ENCODE measurements at regions of chr11 and their contacts with region 1.

Region 1: DNA sequence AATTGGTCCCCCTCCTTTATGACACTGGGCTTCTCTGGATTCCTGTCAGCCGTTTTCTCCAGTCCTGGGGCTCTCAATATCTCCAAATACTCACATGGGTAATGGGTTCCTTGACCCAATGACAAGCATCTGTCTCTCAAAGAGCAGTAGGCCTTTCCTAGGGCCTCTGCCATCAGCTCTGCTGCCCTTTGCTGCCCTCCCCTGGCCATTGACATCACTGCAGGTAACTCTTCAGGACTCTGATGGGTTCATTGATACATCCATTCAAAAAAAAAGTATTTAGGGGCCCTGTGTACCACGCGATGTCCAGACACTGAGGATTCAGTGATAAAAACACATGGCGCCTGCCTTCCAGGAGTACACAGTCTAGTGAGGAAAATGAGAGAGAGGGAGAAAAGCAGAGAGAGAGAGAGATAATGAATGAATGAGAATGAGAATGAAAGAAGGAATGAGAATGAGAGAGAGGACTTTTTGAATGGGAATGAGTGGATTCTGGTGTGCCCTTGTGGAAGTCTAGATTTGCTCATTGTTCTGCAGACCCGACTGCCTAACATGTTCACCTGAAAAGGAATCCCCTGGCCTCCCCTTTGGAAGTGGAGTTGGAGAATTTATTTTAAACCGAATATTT is 42.6 kb upstream of the OLFML1 start:
- DNase-seq: peak; percentile 15 to 69 (median 56)
- ATAC-seq: peak; percentile 87
- H3K4me3 ChIP-seq: no peak overlapping the region
- H3K4me3 Mint-ChIP-seq: no peak overlapping the region
- H3K27ac ChIP-seq: no peak overlapping the region
- H3K27ac Mint-ChIP-seq: no peak overlapping the region
- H3K4me1 ChIP-seq: no peaks in the 10 kb centered on the region
- H3K4me1 Mint-ChIP-seq: peaks cover 0 to 5% (median 0%) of the 10 kb centered on the region in 7 donors
- H3K27me3 ChIP-seq: no peaks in the 10 kb centered on the region
- H3K27me3 Mint-ChIP-seq: no peaks in the 10 kb centered on the region

Region 2: DNA sequence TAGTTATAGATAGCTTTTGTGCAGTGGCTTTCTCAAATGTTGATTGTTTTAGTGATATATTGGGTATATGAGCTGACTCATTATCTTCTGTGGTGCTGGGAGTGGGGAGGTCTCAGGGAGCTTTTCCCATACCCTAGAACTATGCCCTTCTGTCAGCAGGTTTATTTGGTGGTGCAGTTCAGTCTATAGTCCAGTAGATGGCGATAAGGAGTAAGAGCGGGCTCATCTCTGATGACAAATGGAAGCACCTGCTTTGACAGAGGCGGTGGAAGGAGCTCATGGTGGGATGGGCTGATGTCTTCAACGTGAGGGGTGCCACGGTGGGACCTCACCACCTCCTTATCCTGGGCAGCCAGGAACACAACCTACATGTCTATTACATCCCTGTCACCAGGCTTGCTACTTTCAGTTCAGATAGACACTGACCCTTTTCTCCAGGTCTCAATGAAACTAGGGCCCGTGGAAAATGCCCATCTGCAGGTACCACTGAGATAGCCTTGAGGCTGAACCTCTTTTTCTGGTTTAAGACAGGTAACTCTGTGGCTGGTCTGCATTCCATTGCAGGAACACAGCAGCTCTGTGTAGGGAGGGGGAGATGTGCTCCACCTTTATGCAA is 630.2 kb before region 1 on chr11:
- CTCF ChIA-PET with region 1: interaction called, 7 read pairs
- POLR2A ChIA-PET with region 1: no interaction called
- intact Hi-C with region 1: loop called (anchors 1 to 10 kb)
- DNase-seq: peak in 8 of 9 donors; percentile 15 to 55 (median 41)
- ATAC-seq: peak; percentile 91
- H3K4me3 ChIP-seq: no peak overlapping the region
- H3K4me3 Mint-ChIP-seq: no peak overlapping the region
- H3K27ac ChIP-seq: no peak overlapping the region
- H3K27ac Mint-ChIP-seq: no peak overlapping the region
- H3K4me1 ChIP-seq: no peaks in the 10 kb centered on the region
- H3K4me1 Mint-ChIP-seq: peaks cover 0 to 2% (median 0%) of the 10 kb centered on the region in 7 donors
- H3K27me3 ChIP-seq: peaks cover 0 to 3% of the 10 kb centered on the region in 2 donors
- H3K27me3 Mint-ChIP-seq: peaks cover 25 to 61% (median 51%) of the 10 kb centered on the region in 5 donors

Region 3: DNA sequence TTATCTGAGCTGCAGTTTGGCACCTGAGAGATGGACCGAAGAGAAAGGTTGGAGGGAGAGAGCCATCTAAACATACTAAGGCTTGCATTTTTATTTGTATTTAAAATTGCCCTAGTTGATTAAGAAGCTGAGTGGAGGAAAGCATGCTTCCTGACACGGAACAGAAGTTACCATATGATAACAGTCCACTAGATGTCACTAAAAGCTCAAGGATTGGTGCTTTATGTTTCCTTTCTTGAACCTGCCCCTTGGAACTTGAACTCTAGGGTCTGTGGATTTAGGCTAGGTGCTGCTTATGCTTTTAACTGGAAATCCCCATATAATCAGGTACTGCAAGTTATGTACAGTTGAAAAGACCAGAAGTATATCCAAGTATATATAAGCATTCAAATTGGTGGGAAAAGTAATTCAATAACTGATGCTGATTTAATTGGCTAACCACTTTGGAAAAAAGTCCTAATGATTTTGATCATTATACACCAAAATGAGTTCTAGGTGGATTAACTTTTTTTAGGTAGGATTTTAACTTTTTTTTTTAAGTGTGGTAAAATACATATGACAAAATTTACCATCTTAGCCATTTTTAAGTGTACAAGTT is 344.4 kb before region 1 on chr11:
- CTCF ChIA-PET with region 1: interaction called, 7 read pairs
- POLR2A ChIA-PET with region 1: no interaction called
- intact Hi-C with region 1: loop called (anchors 1 kb)
- DNase-seq: peak in 7 of 9 donors; percentile 10 to 52 (median 39)
- ATAC-seq: peak; percentile 69
- H3K4me3 ChIP-seq: no peak overlapping the region
- H3K4me3 Mint-ChIP-seq: no peak overlapping the region
- H3K27ac ChIP-seq: no peak overlapping the region
- H3K27ac Mint-ChIP-seq: no peak overlapping the region
- H3K4me1 ChIP-seq: no peaks in the 10 kb centered on the region
- H3K4me1 Mint-ChIP-seq: no peaks in the 10 kb centered on the region
- H3K27me3 ChIP-seq: no peaks in the 10 kb centered on the region
- H3K27me3 Mint-ChIP-seq: peaks cover 18 to 40% (median 30%) of the 10 kb centered on the region in 5 donors

Region 4: GRCh38 chr11:7548659-7549274 is 106.1 kb after region 1 on chr11:
- CTCF ChIA-PET with region 1: no interaction called
- POLR2A ChIA-PET with region 1: no interaction called
- intact Hi-C with region 1: loop called in 1 of 2 experiments (anchors 1 kb)
- DNase-seq: peak in 5 of 9 donors; percentile 12 to 47 (median 29)
- ATAC-seq: peak; percentile 83
- H3K4me3 ChIP-seq: no peak overlapping the region
- H3K4me3 Mint-ChIP-seq: no peak overlapping the region
- H3K27ac ChIP-seq: no peak overlapping the region
- H3K27ac Mint-ChIP-seq: no peak overlapping the region
- H3K4me1 ChIP-seq: no peaks in the 10 kb centered on the region
- H3K4me1 Mint-ChIP-seq: peaks cover 0 to 47% (median 19%) of the 10 kb centered on the region in 7 donors
- H3K27me3 ChIP-seq: no peaks in the 10 kb centered on the region
- H3K27me3 Mint-ChIP-seq: no peaks in the 10 kb centered on the region

Region 5: DNA sequence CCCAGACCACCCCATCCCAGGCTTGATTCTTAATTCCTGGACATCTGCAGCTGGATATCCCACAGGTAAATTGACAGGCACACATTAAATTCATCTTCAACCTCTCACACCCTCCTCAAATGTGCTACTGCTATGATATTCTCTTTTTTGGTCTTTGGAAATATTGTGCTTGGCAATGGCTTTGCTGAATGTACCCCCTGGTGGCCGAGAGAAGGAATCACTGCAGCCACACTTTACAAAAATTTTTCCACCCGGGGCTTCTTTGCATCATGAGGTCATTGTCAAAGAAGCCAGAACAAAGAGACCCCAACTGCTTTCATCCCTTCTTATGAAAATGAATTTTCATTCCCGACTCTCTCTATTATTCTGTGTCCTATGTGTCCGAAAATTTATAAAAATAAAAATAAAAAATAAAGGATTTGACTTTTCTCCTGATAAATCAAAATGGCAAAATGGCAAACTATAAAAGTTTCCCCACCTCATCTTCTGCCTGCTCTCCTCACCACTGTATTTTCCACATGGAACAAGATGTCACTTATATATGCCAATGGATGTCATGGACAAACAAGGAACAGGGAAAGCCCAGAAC is 245.6 kb after region 1 on chr11:
- CTCF ChIA-PET with region 1: interaction called, 3 read pairs
- POLR2A ChIA-PET with region 1: no interaction called
- intact Hi-C with region 1: loop called (anchors 5 kb)
- DNase-seq: peak in 5 of 9 donors; percentile 8 to 31 (median 22)
- ATAC-seq: peak; percentile 55
- H3K4me3 ChIP-seq: no peak overlapping the region
- H3K4me3 Mint-ChIP-seq: no peak overlapping the region
- H3K27ac ChIP-seq: no peak overlapping the region
- H3K27ac Mint-ChIP-seq: no peak overlapping the region
- H3K4me1 ChIP-seq: no peaks in the 10 kb centered on the region
- H3K4me1 Mint-ChIP-seq: peaks cover 0 to 2% (median 0%) of the 10 kb centered on the region in 7 donors
- H3K27me3 ChIP-seq: no peaks in the 10 kb centered on the region
- H3K27me3 Mint-ChIP-seq: peaks cover 25 to 42% (median 32%) of the 10 kb centered on the region in 5 donors

Measured in naive thymus-derived CD4-positive, alpha-beta T cell (primary cell).